Heart right ventricle (tissue), 16 donors: ENCODE measurements at regions of chr10 and their contacts with region 1.

Region 1: DNA sequence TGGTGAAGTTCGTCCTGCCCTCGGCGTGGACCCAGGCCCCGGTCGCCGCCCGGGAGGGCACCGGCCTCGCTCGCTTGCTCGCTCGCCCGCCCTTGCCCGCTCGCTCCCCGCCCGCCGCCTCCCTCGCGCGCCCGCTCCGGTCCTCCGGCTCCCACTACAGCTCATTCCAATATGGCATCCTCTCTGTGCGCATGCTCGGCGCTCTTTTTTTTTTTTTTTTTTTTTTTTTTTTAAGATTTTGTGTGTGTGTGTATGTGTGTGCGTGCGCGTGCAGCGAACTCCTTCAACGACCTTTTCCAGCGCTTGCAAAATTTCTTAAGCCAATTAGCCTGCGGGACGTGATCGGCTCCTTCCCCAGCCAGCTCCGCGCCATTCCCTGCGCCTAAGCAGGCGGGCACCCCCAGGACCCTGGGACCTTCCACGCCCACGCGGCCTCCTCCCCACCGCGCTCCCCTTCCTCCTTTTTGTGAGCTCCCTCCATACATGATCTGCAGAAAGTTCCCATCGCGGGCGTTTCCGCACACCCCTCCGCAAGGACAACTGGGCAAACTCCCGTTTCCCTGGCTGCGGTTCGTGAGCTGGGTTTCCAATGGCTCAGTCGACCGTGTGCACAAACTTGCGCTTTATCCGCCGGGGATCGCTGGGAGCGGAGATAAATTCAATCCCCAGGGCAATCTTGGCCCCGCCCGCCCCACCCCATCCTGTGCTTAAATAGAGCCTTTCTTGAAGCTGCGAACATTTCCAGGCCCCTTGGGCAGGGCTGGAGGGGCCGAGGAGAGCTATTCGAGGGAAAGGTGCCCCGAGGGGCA is at the start of gene SFMBT2:
- DNase-seq: peak; percentile 64 to 73
- ATAC-seq: peak; percentile 59 to 74 (median 62)
- H3K4me3 ChIP-seq: peak within 1 kb of the TSS; percentile 66 to 88 (median 77)
- H3K27ac ChIP-seq: peak within 1 kb of the TSS; percentile 69 to 93 (median 88)
- H3K4me1 ChIP-seq: peaks cover 14 to 57% (median 41%) of the 10 kb centered on the region in 9 donors
- H3K27me3 ChIP-seq: peaks cover 0 to 38% (median 9%) of the 10 kb centered on the region in 7 donors
- CTCF ChIP-seq: peak in 7 of 9 donors; percentile 9 to 45 (median 16)
- total RNA-seq, gene SFMBT2: 7.3 to 14.2 (median 10.7) TPM

Region 2: GRCh38 chr10:6678211-6678803 is 732.8 kb before region 1 on chr10:
- intact Hi-C with region 1: loop called in 6 of 10 experiments (anchors 5 to 10 kb)
- DNase-seq: peak; percentile 27 to 44
- ATAC-seq: peak in 2 of 8 donors; percentile 41 to 56
- H3K4me3 ChIP-seq: no peak overlapping the region
- H3K27ac ChIP-seq: no peak overlapping the region
- H3K4me1 ChIP-seq: peaks cover 0 to 12% (median 0%) of the 10 kb centered on the region in 9 donors
- H3K27me3 ChIP-seq: peaks cover 0 to 26% (median 5%) of the 10 kb centered on the region in 7 donors
- CTCF ChIP-seq: peak; percentile 36 to 79 (median 68)

Region 3: GRCh38 chr10:6920072-6921019 is 490.7 kb before region 1 on chr10:
- intact Hi-C with region 1: loop called in 7 of 10 experiments (anchors 5 kb)
- DNase-seq: peak; percentile 59 to 62
- ATAC-seq: peak; percentile 83 to 95 (median 90)
- H3K4me3 ChIP-seq: no peak overlapping the region
- H3K27ac ChIP-seq: peak overlapping the region in 1 of 10 donors; percentile 9
- H3K4me1 ChIP-seq: peaks cover 0 to 15% (median 5%) of the 10 kb centered on the region in 9 donors
- H3K27me3 ChIP-seq: peaks cover 0 to 3% (median 0%) of the 10 kb centered on the region in 7 donors
- CTCF ChIP-seq: peak; percentile 28 to 75 (median 65)

Region 4: DNA sequence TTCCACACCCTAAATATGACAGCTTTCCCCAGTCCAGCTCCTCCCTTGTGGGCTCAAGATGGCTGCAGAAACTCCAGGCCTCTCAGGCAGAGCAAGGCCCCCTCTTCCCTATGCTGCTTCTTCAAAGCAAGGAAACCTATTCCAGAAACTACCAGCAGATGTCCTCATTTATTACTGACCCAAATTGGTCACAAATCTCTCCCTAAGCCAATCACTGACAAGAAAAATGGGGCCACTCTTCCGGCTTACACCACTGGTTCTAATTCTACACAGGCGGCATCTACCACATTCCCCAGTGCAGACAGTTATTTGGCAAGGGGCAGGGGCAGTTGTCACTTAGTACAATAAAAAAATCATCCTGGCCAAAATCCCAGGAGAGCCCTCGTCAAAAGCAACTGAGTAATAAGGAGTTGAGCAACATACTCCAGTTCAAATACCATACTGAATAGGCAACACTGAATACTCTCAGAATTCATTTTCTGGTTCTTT is 150.6 kb before region 1 on chr10:
- intact Hi-C with region 1: loop called (anchors 1 to 5 kb)
- DNase-seq: peak in 1 of 2 donors; percentile 82
- ATAC-seq: peak; percentile 91 to 96 (median 94)
- H3K4me3 ChIP-seq: no peak overlapping the region
- H3K27ac ChIP-seq: peak overlapping the region in 8 of 10 donors; percentile 54 to 73 (median 64)
- H3K4me1 ChIP-seq: peaks cover 7 to 67% (median 28%) of the 10 kb centered on the region in 9 donors
- H3K27me3 ChIP-seq: no peaks in the 10 kb centered on the region
- CTCF ChIP-seq: peak; percentile 64 to 89 (median 81)

Region 5: GRCh38 chr10:7345717-7346116 is 65.3 kb before region 1 on chr10:
- intact Hi-C with region 1: loop called in 3 of 10 experiments (anchors 5 to 10 kb)
- DNase-seq: peak in 1 of 2 donors; percentile 40
- ATAC-seq: peak; percentile 74 to 96 (median 87)
- H3K4me3 ChIP-seq: peak overlapping the region in 2 of 10 donors; percentile 5 to 6
- H3K27ac ChIP-seq: peak overlapping the region; percentile 30 to 83 (median 60)
- H3K4me1 ChIP-seq: peaks cover 4 to 31% (median 22%) of the 10 kb centered on the region in 9 donors
- H3K27me3 ChIP-seq: no peaks in the 10 kb centered on the region
- CTCF ChIP-seq: no peak